K562 (cell line): ENCODE measurements at regions of chr6 and their contacts with region 1.

Region 1: GRCh38 chr6:106085984-106086813 is at the start of gene PRDM1:
- DNase-seq: peak; percentile 74 to 87 (median 80)
- ATAC-seq: peak; percentile 94
- H3K4me3 ChIP-seq: peak within 1 kb of the TSS; percentile 43
- H3K27ac ChIP-seq: 0 out of 3 replicates have a peak within 1 kb of the TSS, but pooled peaks have one; percentile 9
- H3K4me1 ChIP-seq: peaks cover 7 to 13% of the 10 kb centered on the region in 2 experiments; a peak in 4 of 5 replicates
- H3K27me3 ChIP-seq: no peaks in the 10 kb centered on the region
- CTCF ChIP-seq: peak; percentile 34 to 38 (median 35); a peak in 3 of 6 replicates
- EP300 ChIP-seq: no peak
- POLR2A ChIP-seq: no peak
- RAD21 ChIP-seq: peak; percentile 65 to 72
- polyA plus RNA-seq, gene PRDM1: 0.20 to 0.21 TPM

Region 2: DNA sequence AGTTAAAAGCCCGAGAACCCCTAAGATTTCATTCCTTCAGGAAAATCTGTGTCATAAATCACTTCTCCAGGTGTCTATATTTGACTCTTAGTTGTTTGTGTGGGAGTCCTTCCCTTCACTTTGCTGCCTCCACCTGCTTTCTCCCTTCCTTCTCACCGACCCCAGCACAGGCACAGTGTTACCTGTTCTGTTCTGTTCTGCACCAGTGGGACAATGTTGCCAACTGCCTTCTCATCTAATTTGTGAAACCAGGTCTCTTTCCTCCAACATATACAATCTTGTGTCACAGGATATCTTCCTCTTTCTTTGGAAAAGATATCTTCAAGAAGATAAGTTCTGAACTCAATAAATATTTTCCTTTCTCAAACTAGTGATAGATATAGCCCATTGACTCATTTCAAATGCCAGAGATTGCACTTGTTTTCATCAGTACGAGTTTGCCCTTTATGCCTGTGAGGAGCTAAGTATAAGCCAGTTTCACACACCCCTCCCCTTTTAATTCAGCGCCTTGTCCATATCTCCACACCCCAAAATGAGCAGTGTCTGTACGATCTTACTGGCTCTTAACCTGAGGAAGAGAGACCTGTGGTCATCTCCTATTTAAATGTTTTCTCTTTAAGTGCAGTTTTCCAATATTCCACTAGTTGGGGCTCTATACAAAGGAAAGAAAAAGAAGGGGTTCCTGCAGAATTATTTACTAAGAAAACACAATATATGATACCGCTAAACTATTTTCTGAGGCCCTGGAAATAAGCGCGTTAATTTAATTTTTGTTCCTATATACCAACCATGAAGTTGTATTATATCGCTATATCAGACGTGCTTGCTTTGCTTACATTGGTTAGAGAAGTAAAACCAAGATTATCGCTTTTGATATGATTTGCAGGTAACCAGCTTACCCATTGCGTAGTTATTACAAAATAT is 601.7 kb before region 1 on chr6:
- CTCF ChIA-PET with region 1: interaction called, 3 read pairs
- POLR2A ChIA-PET with region 1: no interaction called
- in situ Hi-C with region 1: no loop called
- intact Hi-C with region 1: loop called (anchors 2 kb)
- DNase-seq: peak; percentile 25 to 31 (median 28)
- ATAC-seq: peak; percentile 76
- H3K4me3 ChIP-seq: no peak overlapping the region
- H3K27ac ChIP-seq: no peak overlapping the region
- H3K4me1 ChIP-seq: no peaks in the 10 kb centered on the region; a peak in 2 of 5 replicates
- H3K27me3 ChIP-seq: peaks cover 2 to 4% of the 10 kb centered on the region in 2 experiments; a peak in 1 of 5 replicates
- CTCF ChIP-seq: peak; percentile 61 to 90 (median 67); a peak in 5 of 6 replicates
- EP300 ChIP-seq: no peak
- POLR2A ChIP-seq: no peak
- RAD21 ChIP-seq: peak; percentile 90 to 91

Region 3: GRCh38 chr6:105793130-105793529 is 293.1 kb before region 1 on chr6:
- CTCF ChIA-PET with region 1: no interaction called
- POLR2A ChIA-PET with region 1: no interaction called
- in situ Hi-C with region 1: no loop called
- intact Hi-C with region 1: loop called (anchors 1 kb)
- DNase-seq: peak in 2 of 4 experiments; percentile 36 to 52
- ATAC-seq: peak; percentile 88
- H3K4me3 ChIP-seq: no peak overlapping the region
- H3K27ac ChIP-seq: no peak overlapping the region
- H3K4me1 ChIP-seq: peaks cover 0 to 4% of the 10 kb centered on the region in 2 experiments; a peak in 2 of 5 replicates
- H3K27me3 ChIP-seq: no peaks in the 10 kb centered on the region
- CTCF ChIP-seq: peak; percentile 41 to 70 (median 54)
- EP300 ChIP-seq: no peak
- POLR2A ChIP-seq: no peak
- RAD21 ChIP-seq: peak; percentile 80 to 87

Region 4: GRCh38 chr6:105810105-105810921 is 275.9 kb before region 1 on chr6:
- CTCF ChIA-PET with region 1: no interaction called
- POLR2A ChIA-PET with region 1: no interaction called
- in situ Hi-C with region 1: no loop called
- intact Hi-C with region 1: no loop called
- DNase-seq: peak; percentile 82 to 96 (median 86)
- ATAC-seq: peak; percentile 95
- H3K4me3 ChIP-seq: no peak overlapping the region
- H3K27ac ChIP-seq: peak overlapping the region; percentile 86
- H3K4me1 ChIP-seq: peaks cover 23 to 70% of the 10 kb centered on the region in 2 experiments
- H3K27me3 ChIP-seq: no peaks in the 10 kb centered on the region
- CTCF ChIP-seq: no peak
- EP300 ChIP-seq: peak; percentile 88
- POLR2A ChIP-seq: peak; percentile 67
- RAD21 ChIP-seq: no peak; a peak in 1 of 4 replicates

Region 5: DNA sequence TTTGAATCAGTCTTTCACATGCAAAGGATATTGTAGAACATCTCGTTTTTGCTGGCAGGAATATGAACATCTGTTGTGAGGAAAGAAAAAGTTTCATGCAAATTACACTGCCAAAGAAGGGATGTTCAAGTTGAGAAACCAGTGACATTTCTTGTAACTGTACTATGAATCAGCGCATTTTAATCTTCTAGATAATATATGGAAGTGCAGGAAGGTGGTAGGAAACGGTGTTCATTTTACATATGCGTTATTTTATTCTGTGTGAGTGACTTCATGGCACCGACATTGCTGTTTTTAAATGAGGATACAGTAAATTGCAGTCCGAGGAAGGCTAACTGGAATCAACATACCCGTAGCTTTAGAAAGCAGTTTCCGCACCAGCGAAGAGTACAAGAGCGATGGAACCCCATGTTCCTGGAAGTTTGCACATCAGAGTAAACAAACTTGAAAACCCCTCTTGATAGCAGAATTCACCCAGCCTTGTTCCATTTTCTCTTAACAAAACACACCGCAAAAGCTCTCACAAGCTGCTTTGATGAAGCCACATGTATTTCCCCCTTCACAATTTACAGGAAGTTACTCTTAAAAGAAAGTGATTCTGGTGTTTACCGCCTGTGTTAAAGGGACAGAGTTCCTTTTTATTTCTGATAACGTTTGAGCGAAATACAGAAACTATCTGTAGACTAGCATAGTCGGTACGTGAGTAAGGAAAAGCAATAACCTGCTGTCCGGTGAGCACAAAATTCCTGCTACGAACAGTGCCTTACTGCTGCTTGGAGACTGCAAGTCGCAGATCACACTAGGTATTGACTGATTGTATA is 11.4 kb after region 1 on chr6:
- CTCF ChIA-PET with region 1: no interaction called
- POLR2A ChIA-PET with region 1: interaction called, 11 read pairs
- in situ Hi-C with region 1: no loop called
- intact Hi-C with region 1: no loop called
- DNase-seq: peak in 2 of 4 experiments; percentile 20 to 56
- ATAC-seq: peak; percentile 68
- H3K4me3 ChIP-seq: peak overlapping the region; percentile 31
- H3K27ac ChIP-seq: peak overlapping the region; percentile 81
- H3K4me1 ChIP-seq: peaks cover 10 to 25% of the 10 kb centered on the region in 2 experiments; a peak in 4 of 5 replicates
- H3K27me3 ChIP-seq: no peaks in the 10 kb centered on the region
- CTCF ChIP-seq: no peak
- EP300 ChIP-seq: peak; percentile 44; the same call in 1 of the 2 replicates
- POLR2A ChIP-seq: peak; percentile 54
- RAD21 ChIP-seq: no peak

Region 6: DNA sequence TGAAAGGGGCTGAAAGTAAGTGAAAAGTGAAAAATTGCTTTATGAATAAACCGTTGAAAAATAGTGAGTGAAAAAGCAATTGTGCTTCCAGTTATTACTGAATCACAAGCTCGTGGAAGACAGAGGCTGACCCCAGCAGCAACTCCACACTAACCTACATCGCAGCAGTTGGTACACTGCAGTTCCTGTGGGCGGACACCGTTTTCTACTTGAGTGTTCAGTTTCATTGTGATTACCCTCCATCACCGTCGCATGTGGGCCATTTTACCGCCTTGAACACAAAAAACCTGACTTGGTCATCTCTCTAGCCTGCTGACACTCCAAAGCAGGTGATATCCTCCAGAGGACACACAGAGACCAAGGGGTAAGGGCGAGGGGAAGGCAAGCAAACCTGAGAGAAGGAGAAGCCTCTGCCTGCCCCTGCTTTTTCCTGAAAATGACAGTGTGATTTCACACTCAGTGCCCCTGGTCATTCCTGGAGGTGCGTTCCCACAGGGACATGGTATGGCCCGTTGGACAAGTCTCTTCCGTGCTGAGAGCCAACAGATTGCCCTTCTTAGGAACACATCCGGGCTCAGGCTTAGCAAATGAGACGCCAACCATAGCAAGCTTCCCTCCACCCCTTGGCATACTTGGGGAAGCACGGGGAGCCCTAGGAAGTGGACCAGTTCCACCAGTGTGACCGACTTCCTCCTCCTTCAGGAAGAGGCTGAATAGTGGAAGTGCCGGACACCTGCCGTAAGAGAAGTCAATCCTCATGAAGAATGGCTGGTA is 28.5 kb after region 1 on chr6:
- CTCF ChIA-PET with region 1: no interaction called
- POLR2A ChIA-PET with region 1: no interaction called
- in situ Hi-C with region 1: no loop called
- intact Hi-C with region 1: no loop called
- DNase-seq: no peak
- ATAC-seq: no peak; the same call in 1 of the 3 replicates
- H3K4me3 ChIP-seq: no peak overlapping the region
- H3K27ac ChIP-seq: no peak overlapping the region
- H3K4me1 ChIP-seq: peaks cover 5 to 10% of the 10 kb centered on the region in 2 experiments; a peak in 4 of 5 replicates
- H3K27me3 ChIP-seq: no peaks in the 10 kb centered on the region
- CTCF ChIP-seq: no peak
- EP300 ChIP-seq: no peak
- POLR2A ChIP-seq: no peak
- RAD21 ChIP-seq: no peak

Region 7: DNA sequence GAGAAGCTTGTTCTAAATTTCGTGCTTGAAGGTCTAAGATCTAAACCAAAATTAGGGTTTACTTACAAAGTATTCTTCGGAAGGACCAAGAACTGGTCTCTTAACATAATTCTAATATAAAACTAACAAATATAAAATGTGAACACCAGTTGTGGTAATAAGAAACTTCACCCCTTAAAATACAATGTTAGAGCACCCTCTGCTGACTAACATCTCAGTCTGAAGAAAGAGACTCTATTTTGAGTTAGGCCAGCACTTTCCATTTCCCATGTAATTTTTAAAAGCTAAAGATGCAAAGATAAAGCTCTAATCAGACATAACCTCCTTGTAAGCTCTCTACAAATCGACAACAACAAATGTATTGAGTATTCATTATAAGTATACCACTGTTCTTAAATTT is 214.7 kb after region 1 on chr6:
- CTCF ChIA-PET with region 1: no interaction called
- POLR2A ChIA-PET with region 1: no interaction called
- in situ Hi-C with region 1: no loop called
- intact Hi-C with region 1: loop called (anchors 1 kb)
- DNase-seq: peak in 2 of 4 experiments; percentile 17 to 38
- ATAC-seq: peak; percentile 72
- H3K4me3 ChIP-seq: no peak overlapping the region
- H3K27ac ChIP-seq: no peak overlapping the region
- H3K4me1 ChIP-seq: no peaks in the 10 kb centered on the region
- H3K27me3 ChIP-seq: no peaks in the 10 kb centered on the region
- CTCF ChIP-seq: peak in 2 of 3 experiments; percentile 35 to 55; a peak in 4 of 6 replicates
- EP300 ChIP-seq: no peak
- POLR2A ChIP-seq: no peak
- RAD21 ChIP-seq: peak; percentile 64 to 70